ENCODE measurements at regions of chr12 and their contacts with region 1.

Region 1: GRCh38 chr12:34022079-34022830 is at the start of gene ALG10:
- DNase-seq: peak; percentile 95 to 98 (median 97)
- H3K4me3 ChIP-seq: peak within 1 kb of the TSS; percentile 82 to 83
- H3K4me3 Mint-ChIP-seq: peak within 1 kb of the TSS; percentile 92 to 97 (median 96)
- H3K27ac ChIP-seq: peak within 1 kb of the TSS; percentile 84
- H3K27ac Mint-ChIP-seq: peak within 1 kb of the TSS; percentile 96 to 99 (median 99)
- H3K4me1 ChIP-seq: peaks cover 19% of the 10 kb centered on the region
- H3K4me1 Mint-ChIP-seq: peaks cover 12 to 23% (median 16%) of the 10 kb centered on the region in 4 donors
- H3K27me3 ChIP-seq: no peaks in the 10 kb centered on the region
- H3K27me3 Mint-ChIP-seq: peaks cover 0 to 2% of the 10 kb centered on the region in 2 donors
- total RNA-seq, gene ALG10: 22.1 to 22.5 TPM

Region 2: GRCh38 chr12:32302218-32303173 is 1719.8 kb before region 1 on chr12:
- CTCF ChIA-PET with region 1: no interaction called
- POLR2A ChIA-PET with region 1: no interaction called
- intact Hi-C with region 1: loop called (anchors 10 kb)
- DNase-seq: peak in 4 of 5 donors; percentile 6 to 18 (median 8)
- H3K4me3 ChIP-seq: no peak overlapping the region
- H3K4me3 Mint-ChIP-seq: no peak overlapping the region
- H3K27ac ChIP-seq: no peak overlapping the region
- H3K27ac Mint-ChIP-seq: peak overlapping the region in 2 of 7 donors; percentile 20 to 29
- H3K4me1 ChIP-seq: no peaks in the 10 kb centered on the region
- H3K4me1 Mint-ChIP-seq: peaks cover 0 to 4% (median under 1%) of the 10 kb centered on the region in 4 donors
- H3K27me3 ChIP-seq: no peaks in the 10 kb centered on the region
- H3K27me3 Mint-ChIP-seq: no peaks in the 10 kb centered on the region

Region 3: DNA sequence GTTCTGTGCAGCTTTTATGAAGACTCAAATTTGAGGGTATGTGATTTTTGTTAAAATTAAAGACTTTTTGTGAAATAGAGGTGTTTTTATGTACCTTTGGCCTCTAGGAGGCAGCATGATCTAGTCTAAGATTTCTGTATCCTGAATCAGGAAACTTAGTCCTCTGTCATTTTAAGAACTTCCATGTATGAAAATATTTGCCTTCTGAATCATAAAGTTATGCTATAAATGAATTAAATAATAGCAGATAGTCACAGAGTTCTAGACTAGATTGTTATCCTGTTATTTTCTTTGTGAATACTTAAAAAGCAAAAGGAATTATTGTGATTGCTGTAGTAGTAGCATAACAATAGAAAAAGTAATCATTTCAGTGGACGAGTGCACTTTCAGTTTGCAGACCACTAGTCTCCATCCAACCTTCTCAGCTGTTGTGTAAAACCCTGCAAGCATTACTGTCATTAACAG is 1566.6 kb before region 1 on chr12:
- CTCF ChIA-PET with region 1: interaction called, 5 read pairs
- POLR2A ChIA-PET with region 1: no interaction called
- intact Hi-C with region 1: loop called (anchors 1 kb)
- DNase-seq: peak in 4 of 5 donors; percentile 17 to 29 (median 28)
- H3K4me3 ChIP-seq: no peak overlapping the region
- H3K4me3 Mint-ChIP-seq: peak overlapping the region in 6 of 8 donors; percentile 15 to 49 (median 25)
- H3K27ac ChIP-seq: no peak overlapping the region
- H3K27ac Mint-ChIP-seq: no peak overlapping the region
- H3K4me1 ChIP-seq: no peaks in the 10 kb centered on the region
- H3K4me1 Mint-ChIP-seq: peaks cover 0 to 5% (median 2%) of the 10 kb centered on the region in 4 donors
- H3K27me3 ChIP-seq: no peaks in the 10 kb centered on the region
- H3K27me3 Mint-ChIP-seq: peaks cover 0 to 4% of the 10 kb centered on the region in 2 donors

Region 4: DNA sequence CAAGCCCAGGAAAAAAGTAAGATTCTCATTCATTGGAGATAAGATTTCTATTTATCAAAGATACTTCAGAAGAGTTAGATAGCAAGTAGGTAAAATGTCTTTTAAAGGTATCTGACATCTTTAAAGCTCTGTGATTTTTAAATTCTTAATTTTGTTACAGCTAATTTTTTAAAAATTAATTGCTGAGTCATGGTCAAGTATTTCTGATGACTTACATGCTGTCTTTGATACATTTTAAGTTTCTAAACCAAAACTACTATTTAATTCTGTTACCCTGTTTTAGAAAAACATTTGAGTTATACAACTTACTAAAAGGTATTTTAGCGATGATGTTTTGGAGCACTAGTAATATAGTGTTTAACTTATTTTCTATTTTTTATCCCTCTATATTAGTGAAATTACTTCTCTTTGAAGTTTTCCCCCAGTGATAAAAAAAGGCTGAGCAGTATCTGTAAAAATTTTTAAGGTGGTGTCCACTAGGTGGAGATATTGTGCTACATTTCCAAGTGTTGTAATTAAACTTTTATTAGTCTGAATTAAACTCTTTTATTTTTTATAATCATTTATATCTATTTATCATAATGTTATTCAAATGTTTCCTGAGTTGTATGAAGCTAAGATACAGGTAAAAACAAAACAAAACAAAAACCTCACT is 11.5 kb after region 1 on chr12:
- CTCF ChIA-PET with region 1: interaction called, 15 read pairs
- POLR2A ChIA-PET with region 1: interaction called, 5 read pairs
- intact Hi-C with region 1: no loop called
- DNase-seq: peak in 4 of 5 donors; percentile 24 to 41 (median 31)
- H3K4me3 ChIP-seq: no peak overlapping the region
- H3K4me3 Mint-ChIP-seq: no peak overlapping the region
- H3K27ac ChIP-seq: no peak overlapping the region
- H3K27ac Mint-ChIP-seq: no peak overlapping the region
- H3K4me1 ChIP-seq: no peaks in the 10 kb centered on the region
- H3K4me1 Mint-ChIP-seq: no peaks in the 10 kb centered on the region
- H3K27me3 ChIP-seq: no peaks in the 10 kb centered on the region
- H3K27me3 Mint-ChIP-seq: no peaks in the 10 kb centered on the region

Measured in CD4-positive, alpha-beta memory T cell (primary cell).